Breast epithelium (tissue), 4 donors: ENCODE measurements at regions of chr11 and their contacts with region 1.

Region 1: GRCh38 chr11:95254131-95254704 is 23.2 kb upstream of the SESN3 start:
- DNase-seq: peak; percentile 46 to 60
- H3K4me3 ChIP-seq: peak overlapping the region; percentile 3 to 47 (median 20)
- H3K27ac ChIP-seq: peak overlapping the region in 1 of 2 donors; percentile 32
- H3K4me1 ChIP-seq: no peaks in the 10 kb centered on the region
- H3K27me3 ChIP-seq: no peaks in the 10 kb centered on the region
- CTCF ChIP-seq: no peak
- POLR2A ChIP-seq: no peak

Region 2: DNA sequence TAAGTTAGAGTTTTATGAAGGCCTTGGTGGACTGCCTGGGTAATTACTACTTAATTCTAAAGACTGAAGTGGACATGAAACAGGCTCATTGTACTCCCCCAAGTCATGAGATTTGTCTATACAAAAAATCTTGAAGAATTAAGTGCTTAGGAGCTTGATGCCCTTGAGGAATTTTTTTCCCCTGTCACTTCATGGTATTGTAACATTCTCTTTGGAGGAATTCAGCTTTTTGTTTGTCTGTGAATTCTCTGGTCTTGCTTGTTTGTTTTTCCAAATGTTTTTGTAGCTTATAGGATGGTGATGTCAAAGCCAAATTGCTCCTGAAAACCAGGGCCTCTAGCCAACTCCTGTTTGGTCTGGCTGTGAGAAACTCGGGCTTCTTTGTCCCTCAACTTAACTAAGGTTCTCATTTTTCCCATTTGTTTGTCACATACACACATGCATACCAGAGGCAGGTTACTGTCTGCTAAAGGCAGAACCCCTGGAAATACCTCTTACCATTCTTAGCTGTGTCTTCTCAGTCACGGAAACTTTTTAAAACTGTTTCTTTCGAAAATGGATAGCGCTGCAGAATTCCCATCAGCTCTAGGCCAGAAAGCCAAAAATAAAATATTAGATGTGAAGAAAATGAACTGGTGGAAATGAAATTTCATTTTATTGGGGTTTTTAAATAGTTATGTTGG is 419.2 kb before region 1 on chr11:
- intact Hi-C with region 1: no loop called
- DNase-seq: no peak
- H3K4me3 ChIP-seq: no peak overlapping the region
- H3K27ac ChIP-seq: no peak overlapping the region
- H3K4me1 ChIP-seq: no peaks in the 10 kb centered on the region
- H3K27me3 ChIP-seq: no peaks in the 10 kb centered on the region
- CTCF ChIP-seq: no peak
- POLR2A ChIP-seq: no peak

Region 3: DNA sequence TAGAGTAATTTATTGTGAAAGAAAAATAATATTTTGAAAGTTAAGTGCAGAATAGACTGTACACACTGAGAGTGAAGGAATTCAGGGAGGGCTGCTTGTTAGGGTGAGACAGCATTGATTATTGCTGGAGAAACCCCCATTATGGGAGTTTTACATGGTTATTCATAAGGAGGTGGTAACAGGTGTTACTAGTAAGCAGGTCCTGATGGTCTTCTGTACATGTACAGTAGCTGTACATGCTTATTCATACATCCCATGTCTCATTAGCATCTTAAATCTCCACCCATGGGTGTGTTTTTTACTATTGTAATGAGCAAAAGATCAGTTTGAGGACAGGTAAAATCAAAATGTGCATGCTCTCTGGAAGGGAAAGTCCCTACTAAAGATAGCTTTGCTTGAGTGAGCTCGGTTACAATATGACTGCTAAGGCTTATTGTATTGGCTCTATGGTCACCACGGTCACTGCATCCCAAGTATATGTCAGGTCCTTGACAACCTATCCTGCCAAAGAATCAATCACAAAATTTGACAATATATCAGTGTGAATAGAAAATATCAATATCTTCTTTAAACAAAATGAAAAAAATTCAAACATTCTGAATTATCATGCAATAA is 198.8 kb before region 1 on chr11:
- intact Hi-C with region 1: no loop called
- DNase-seq: no peak
- H3K4me3 ChIP-seq: no peak overlapping the region
- H3K27ac ChIP-seq: no peak overlapping the region
- H3K4me1 ChIP-seq: no peaks in the 10 kb centered on the region
- H3K27me3 ChIP-seq: peaks cover 0 to 7% of the 10 kb centered on the region in 2 donors
- CTCF ChIP-seq: no peak
- POLR2A ChIP-seq: no peak

Region 4: GRCh38 chr11:95711162-95711944 is 457.1 kb after region 1 on chr11:
- intact Hi-C with region 1: loop called (anchors 5 kb)
- DNase-seq: no peak
- H3K4me3 ChIP-seq: no peak overlapping the region
- H3K27ac ChIP-seq: no peak overlapping the region
- H3K4me1 ChIP-seq: no peaks in the 10 kb centered on the region
- H3K27me3 ChIP-seq: no peaks in the 10 kb centered on the region
- CTCF ChIP-seq: no peak
- POLR2A ChIP-seq: no peak